Adrenal gland (tissue), 19 donors: ENCODE measurements at regions of chr19 and their contacts with region 1.

Region 1: DNA sequence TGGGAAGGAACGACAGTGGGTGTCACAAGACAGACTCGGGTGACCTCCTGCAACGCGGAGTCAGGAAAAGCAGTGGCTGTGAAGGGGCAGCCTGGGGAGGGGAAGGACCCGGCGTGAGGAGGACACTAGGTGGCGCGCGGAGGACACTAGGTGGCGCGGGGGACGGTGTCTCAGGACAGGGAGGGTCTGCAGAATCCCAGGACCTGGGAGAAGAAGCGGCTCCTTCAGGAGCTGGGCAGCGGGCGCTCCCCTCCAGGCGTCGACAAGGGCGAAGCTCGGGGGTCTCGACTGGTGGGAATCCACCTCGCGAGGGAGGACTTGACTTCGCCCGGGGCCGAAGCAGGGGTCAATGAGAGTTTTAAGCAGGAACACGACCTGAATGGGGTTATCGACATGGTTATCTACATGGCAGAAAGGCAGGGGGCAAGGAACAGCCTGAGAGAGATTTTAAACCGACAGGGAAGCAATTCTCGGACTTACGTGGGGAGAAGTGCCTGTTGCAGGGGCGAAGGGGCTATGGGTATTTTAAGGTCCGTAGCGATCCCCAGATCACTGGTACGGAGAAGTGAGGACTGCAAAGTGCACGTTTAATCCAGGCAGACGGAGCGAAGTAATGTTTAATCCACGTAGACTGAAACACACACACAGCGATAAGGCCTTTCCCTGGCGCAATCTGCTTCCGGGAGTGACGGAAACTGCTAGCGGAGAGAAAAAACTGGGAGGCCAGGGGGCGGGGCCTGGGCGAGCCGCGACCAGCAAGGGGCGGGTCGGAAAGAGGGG is at the start of gene ZNF616:
- DNase-seq: peak; percentile 98 to 99 (median 98)
- H3K4me3 ChIP-seq: peak within 1 kb of the TSS in 3 of 4 donors; percentile 78 to 96 (median 84)
- H3K27ac ChIP-seq: peak within 1 kb of the TSS; percentile 61 to 99 (median 97)
- H3K4me1 ChIP-seq: peaks cover 0 to 21% of the 10 kb centered on the region in 2 donors
- H3K27me3 ChIP-seq: no peaks in the 10 kb centered on the region
- CTCF ChIP-seq: peak; percentile 65 to 94 (median 88)
- POLR2A ChIP-seq: peak; percentile 55 to 84
- total RNA-seq, gene ZNF616: 7.0 to 55.4 (median 15.6) TPM

Region 2: DNA sequence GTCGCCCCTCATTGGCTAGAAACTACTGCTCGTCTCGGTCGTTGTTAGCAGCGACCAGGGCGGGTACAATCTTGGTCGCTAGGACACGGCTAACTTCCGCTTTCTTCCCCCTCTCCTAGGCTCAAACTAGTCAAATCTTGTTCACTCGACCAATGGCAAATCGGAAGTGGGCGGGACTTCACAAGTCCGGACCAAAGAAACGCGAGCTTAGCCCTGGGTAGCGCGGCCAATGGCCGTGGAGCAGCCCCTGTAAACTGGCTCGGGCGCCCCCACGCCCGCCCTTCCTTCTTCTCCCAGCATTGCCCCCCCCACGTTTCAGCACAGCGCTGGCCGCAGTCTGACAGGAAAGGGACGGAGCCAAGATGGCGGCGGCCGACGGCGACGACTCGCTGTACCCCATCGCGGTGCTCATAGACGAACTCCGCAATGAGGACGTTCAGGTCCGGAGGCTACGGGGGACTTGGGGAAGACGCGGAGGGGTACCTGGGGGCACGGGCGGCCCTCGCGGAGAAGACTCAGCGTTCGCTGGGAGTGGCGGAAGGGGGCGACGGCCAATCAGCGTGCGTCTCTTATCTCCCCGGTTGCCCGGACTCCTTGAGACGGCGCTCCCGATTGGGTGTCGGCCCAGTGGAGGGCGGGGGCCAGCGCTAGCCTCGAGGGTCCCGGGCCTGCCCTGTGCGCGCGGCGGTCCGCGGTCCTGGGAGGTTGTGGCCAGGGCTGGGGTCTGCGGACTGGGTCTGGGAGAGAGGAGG is 50.5 kb after region 1 on chr19 and contains the start of gene PPP2R1A:
- intact Hi-C with region 1: loop called in 1 of 2 experiments (anchors 5 kb)
- DNase-seq: peak; percentile 99 to 100 (median 100)
- H3K4me3 ChIP-seq: peak within 1 kb of the TSS; percentile 37 to 99 (median 91)
- H3K27ac ChIP-seq: peak within 1 kb of the TSS; percentile 96 to 99 (median 99)
- H3K4me1 ChIP-seq: peaks cover 36 to 49% of the 10 kb centered on the region in 2 donors
- H3K27me3 ChIP-seq: no peaks in the 10 kb centered on the region
- CTCF ChIP-seq: peak in 1 of 6 experiments; percentile 1
- POLR2A ChIP-seq: peak; percentile 97
- total RNA-seq, gene PPP2R1A: 161 to 1,330 (median 354) TPM

Region 3: DNA sequence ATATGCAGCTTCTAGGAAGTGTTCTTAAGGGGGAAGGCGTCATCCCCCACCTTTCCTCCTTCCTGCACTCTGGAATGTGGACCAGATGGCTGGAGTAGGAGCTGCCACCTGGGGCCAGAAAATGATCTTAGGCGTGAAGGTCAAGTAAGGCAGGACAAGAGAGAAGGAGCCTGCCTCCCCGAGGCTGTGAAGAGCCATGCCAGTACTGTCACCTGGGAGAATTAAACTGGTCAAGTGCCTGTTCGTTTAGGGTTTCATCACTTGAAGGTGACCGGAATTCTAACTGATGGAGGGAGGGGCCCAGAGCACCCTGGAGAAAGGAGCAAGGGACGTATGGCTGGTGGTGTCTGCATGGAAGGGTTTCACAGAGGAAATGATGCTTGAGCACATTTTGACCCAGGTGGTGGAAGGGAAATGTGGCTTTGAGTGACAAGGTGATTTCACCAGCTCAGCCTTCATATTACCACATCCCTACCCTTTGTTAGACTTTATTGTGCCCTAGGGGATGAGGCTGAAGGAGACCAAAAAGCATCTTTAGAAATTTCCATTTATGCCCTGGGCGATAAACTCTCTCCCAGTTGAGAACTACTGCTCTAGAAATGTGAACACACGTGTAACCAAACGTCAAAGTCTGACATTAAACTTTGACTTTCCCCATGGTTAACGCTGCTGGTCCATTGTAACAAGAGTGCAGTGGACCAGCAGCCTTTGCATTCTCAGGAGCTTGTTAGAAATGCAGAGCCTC is 87.9 kb after region 1 on chr19:
- intact Hi-C with region 1: loop called in 1 of 2 experiments (anchors 5 kb)
- DNase-seq: no peak
- H3K4me3 ChIP-seq: no peak overlapping the region
- H3K27ac ChIP-seq: peak overlapping the region in 1 of 5 donors; percentile 32
- H3K4me1 ChIP-seq: peaks cover 5 to 19% of the 10 kb centered on the region in 2 donors
- H3K27me3 ChIP-seq: no peaks in the 10 kb centered on the region
- CTCF ChIP-seq: no peak
- POLR2A ChIP-seq: no peak

Region 4: GRCh38 chr19:52237771-52238400 is 98.4 kb after region 1 on chr19:
- intact Hi-C with region 1: loop called in 1 of 2 experiments (anchors 2 kb)
- DNase-seq: peak; percentile 44 to 87 (median 68)
- H3K4me3 ChIP-seq: no peak overlapping the region
- H3K27ac ChIP-seq: no peak overlapping the region
- H3K4me1 ChIP-seq: no peaks in the 10 kb centered on the region
- H3K27me3 ChIP-seq: no peaks in the 10 kb centered on the region
- CTCF ChIP-seq: peak; percentile 79 to 94 (median 89)
- POLR2A ChIP-seq: no peak